ENCODE measurements at regions of chr4 and their contacts with region 1.

Region 1: DNA sequence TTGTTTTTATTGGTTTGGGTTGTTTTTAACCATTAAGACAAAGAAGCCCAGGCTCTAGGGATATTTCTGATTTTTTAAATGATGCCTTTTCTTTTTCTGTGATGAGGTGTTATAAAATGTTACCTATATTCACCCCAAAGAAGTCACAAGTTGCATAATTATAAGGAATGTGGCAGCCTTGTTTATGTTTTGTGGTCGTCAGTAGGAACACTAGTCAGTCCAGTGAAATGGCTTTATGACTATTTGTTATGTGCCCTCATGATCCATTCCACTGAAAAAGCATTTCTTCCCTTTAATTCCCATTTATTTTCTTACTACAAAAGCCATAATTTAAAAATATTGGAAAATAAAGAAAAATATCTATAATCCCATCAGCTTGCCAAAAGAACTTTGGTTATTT is 34.4 kb downstream of the CC2D2A start:
- DNase-seq: no peak
- ATAC-seq: no peak

Region 2: DNA sequence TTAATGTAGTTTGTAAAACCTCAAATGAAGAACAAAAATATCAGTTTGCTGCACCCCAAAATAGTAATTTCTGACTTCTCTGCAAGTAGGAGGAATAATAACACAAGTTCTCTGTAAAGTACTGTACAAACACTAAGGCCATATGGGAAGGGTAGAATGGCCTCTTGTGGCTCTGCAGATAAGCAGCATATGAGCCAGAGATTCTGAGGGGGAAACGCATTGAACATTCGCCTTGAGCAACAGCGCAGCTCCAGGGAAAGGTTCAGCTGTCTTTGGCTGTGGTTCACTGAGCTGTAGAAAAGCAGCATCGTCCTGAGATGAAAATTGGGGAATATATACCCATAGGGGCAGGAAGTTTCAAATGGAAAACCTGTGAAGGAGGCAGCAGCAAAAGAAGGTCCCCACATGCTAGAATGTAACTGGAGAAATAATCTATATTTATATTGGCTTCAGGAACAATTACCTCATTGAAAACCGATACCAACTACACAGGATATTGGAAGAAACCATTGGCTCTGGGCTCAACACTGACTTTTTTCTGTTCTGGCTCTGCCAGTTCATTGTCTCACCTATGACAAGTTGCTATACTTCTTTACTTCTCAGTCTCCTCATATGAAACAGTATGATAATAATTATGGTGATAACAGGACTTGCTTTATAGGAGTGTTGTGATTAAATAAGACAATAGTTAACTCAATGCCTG is 859.3 kb before region 1 on chr4:
- intact Hi-C with region 1: no loop called
- DNase-seq: no peak
- ATAC-seq: no peak

Region 3: GRCh38 chr4:15521442-15522039 is 17.5 kb after region 1 on chr4:
- intact Hi-C with region 1: loop called (anchors 2 kb)
- DNase-seq: no peak
- ATAC-seq: no peak

Region 4: GRCh38 chr4:15691346-15692135 is 187.5 kb after region 1 on chr4:
- intact Hi-C with region 1: no loop called
- DNase-seq: no peak
- ATAC-seq: peak; percentile 21